K562 (cell line): ENCODE measurements at regions of chr5 and their contacts with region 1.

Region 1: DNA sequence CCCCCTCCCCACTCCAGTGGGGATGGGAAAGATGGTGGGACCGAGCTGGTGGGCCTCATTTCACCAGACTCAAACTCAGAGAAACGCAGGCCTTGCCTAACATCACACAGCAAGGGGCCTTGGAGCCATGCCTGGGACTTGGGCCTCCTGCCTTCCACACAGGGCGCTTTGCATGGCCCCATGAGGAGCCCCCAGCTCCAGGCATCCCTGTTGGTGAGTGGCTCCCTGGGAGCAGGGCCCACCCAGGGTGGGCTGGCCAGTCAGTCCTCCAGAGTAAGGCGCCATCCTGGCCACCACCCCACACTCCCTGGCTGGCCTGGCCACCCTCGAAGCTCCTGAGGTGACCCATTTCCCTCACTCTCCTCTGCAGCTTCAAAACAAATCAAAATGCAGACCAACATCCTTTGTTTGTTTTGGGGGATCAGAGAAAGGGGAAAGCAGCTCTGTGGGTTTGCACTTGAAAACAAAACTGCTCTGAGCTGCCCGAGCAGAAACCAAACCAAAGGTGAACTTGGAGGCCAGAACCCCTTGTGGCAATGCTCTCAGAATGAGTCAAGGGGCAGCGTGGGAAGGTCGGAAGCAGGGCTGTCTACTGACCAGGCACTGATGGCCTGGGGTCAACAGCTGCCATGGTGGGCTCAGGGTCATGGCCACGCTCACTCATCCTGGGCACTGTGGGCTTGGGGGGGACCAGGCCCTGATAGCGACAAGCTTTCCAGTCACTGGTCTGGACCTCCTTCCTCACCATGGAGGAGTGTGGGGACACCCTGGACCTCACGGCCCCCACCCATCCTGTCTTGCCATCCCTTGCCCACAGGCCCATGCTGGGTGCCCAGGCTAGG is 37.0 kb upstream of the VDAC1 start:
- DNase-seq: no peak
- ATAC-seq: no peak
- H3K4me3 ChIP-seq: no peak overlapping the region
- H3K27ac ChIP-seq: no peak overlapping the region
- H3K4me1 ChIP-seq: no peaks in the 10 kb centered on the region; a peak in 1 of 5 replicates
- H3K27me3 ChIP-seq: peaks cover 2 to 31% of the 10 kb centered on the region in 2 experiments; a peak in 2 of 5 replicates
- CTCF ChIP-seq: no peak
- EP300 ChIP-seq: no peak
- POLR2A ChIP-seq: no peak
- RAD21 ChIP-seq: no peak

Region 2: GRCh38 chr5:133652951-133653759 is 388.6 kb before region 1 on chr5:
- CTCF ChIA-PET with region 1: no interaction called
- POLR2A ChIA-PET with region 1: no interaction called
- in situ Hi-C with region 1: no loop called
- intact Hi-C with region 1: no loop called
- DNase-seq: no peak
- ATAC-seq: no peak
- H3K4me3 ChIP-seq: no peak overlapping the region
- H3K27ac ChIP-seq: no peak overlapping the region
- H3K4me1 ChIP-seq: no peaks in the 10 kb centered on the region
- H3K27me3 ChIP-seq: peaks cover 0 to 5% of the 10 kb centered on the region in 2 experiments; a peak in 1 of 5 replicates
- CTCF ChIP-seq: no peak
- EP300 ChIP-seq: no peak
- POLR2A ChIP-seq: no peak
- RAD21 ChIP-seq: no peak

Region 3: DNA sequence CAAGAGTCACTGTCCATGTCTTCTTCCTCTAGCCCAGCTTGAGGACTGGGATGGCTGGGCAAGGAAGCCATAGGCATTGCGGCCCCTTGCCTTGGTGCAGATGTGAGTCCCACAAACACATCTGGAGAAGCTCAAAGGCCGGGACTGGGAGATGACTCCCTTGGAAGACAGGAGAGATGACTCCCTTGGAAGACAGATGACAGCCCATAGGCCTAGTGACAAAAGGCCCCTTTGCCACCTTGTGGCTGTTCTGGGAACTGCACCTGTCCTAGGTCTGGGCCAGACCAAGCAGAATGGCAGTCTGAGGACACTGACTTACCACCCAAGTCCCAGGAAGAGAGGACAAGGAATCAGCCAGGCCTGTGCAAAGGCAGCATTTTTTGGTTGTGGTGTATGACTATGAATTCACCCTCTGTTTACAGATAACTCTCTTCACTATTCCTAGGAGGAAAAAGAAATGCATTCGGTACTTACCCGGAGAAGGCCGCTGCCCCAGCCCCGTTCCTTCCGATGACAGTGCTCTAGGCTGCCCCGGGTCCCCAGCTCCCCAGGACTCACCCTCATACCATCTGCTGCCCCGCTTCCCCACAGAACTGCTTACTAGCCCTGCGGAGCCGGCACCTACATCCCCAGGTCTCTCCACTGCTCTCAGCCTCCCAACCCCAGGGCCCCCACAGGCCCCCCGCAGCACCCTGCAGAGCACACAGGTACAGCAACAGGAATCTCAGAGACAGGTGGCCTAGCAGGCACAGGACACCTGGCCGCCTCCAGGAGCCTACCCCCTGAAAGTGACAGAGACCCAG is 104.2 kb after region 1 on chr5:
- CTCF ChIA-PET with region 1: interaction called, 39 read pairs
- POLR2A ChIA-PET with region 1: no interaction called
- in situ Hi-C with region 1: loop called (anchors 5 kb)
- intact Hi-C with region 1: loop called (anchors 1 kb)
- DNase-seq: peak; percentile 66 to 86 (median 68)
- ATAC-seq: peak; percentile 91
- H3K4me3 ChIP-seq: no peak overlapping the region
- H3K27ac ChIP-seq: no peak overlapping the region
- H3K4me1 ChIP-seq: peaks cover 4 to 20% of the 10 kb centered on the region in 2 experiments; a peak in 4 of 5 replicates
- H3K27me3 ChIP-seq: no peaks in the 10 kb centered on the region
- CTCF ChIP-seq: peak; percentile 85 to 93 (median 92)
- EP300 ChIP-seq: no peak
- POLR2A ChIP-seq: no peak
- RAD21 ChIP-seq: peak; percentile 41 to 64; a peak in 3 of 4 replicates